GM10248 (cell line): ENCODE measurements at regions of chr12 and their contacts with region 1.

Region 1: DNA sequence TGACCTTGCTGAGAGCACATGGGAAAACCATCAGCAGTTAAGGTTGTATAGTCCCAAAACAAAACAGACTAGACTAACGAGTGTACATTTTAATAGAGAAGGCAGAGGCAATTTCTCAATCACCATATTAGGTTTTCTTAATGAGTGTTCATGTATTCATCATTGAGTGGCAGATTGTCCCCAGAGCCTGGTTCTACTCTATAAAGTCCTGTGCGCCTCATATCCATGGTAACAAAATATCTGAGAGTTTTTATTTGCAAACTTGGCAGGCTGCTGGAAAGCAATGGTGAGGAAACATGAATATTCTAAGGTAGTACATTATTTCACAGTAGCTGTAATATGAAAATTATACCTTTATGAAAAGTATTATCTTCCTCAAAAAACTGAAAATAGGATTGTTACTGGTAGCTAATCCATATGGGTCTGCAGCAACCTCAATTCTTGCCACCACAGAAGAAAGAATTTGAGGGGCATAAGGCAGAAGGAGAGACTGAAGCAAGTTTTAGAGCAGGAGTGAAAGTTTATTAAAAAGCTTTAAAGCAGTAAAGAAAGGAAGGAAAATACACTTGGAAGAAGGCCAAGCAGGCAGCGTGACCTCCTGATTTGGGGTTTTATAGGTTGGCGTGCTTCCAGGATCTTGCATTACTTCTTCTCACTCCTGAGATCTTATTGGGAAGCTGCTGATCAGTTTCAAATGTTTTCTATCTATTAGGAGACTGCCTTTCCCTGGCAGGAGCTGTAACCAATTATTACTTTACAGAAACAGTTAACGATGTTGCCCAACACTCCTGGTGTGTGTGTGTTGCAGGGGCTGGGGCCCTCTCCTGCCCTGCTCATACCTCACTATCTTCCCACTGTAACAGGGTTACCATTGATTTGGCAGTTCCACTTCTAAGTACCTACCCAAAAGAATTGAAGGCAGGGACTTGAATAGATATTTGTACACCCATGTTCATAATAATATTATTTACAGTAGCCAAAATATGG is 154.0 kb upstream of the NUDT4 start:
- DNase-seq: no peak
- CTCF ChIP-seq: no peak

Region 2: DNA sequence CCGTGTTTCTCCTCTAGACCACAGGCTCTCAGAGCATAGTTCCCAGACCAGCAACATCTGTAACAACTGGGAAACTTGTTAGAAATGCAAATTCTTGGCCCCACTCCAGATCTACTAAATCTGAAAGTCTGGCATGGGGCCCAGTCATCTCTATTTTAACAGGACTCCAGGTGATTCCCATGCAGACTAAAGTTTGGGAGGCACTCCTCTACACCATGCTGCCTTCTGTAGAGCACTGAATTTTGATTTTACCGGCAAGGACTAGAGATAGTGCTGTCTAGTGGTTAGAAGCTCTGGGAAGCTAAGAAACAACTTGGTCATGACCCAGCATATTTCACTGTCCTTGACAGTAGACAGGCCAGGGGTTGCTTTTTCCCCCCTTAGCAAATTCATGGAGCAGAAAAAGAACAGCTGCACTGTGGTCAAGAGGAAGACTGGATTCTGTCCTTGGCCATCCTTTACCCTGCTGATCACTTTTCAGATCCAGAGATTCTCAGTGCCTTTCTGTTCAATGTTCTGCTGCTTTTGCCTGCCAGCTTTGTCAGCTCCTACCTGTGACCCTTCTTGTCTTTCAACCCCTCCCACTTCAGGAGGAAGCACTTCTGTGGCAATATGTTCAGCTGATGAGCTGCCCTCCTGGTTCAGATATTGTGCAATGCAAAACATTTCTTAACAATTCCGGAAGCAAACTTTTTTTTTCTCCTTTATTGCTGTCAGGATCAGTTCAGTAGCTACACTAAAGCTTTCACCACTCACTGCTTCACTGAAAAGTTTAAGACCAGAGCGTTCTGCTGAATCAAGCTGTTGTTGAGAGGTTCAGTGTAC is 20.2 kb after region 1 on chr12:
- CTCF ChIA-PET with region 1: interaction called, 11 read pairs
- POLR2A ChIA-PET with region 1: no interaction called
- DNase-seq: peak; percentile 23
- CTCF ChIP-seq: no peak